Activated B cell treated with CpG ODN at 0.5 μM for 24 hours (primary cell): ENCODE measurements at regions of chr2 and their contacts with region 1.

Region 1: DNA sequence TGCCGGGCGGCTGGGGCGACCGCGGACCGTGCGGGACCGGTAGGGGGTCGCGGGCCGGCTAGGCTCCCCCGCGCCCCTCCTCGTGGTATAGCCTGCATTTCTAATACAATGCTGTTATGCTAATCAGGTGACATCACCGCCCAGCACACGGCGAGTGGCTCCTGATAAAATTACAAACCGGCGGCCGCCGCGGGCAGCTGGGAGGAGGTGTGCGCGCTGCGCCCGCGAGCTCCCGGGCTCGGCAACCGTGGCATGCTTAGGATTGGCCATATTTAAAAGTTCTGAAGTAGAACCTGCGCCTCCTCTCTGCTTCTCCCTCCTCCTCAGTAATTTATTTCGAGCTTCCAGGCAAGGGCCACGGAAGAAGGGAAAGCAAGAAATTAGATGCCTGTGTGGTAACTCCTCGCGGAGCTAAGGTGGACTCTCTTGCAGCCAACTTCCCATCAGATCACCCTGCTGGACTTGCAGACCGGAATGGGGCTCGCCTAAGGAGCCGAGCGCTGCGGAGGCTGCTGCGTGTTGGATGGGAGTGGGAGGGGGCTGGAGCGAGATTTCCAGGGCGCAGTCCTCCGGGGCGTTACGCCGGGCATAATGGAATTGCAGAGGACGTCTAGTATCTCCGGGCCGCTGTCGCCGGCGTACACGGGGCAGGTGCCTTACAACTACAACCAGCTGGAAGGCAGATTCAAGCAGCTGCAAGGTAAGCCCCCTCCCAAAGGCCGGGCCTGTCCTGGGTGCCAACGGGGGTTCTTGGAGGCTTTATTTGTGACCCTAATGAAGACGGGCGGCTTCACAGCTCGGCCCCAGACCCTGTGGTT is 102.3 kb downstream of the SPTBN1 start:
- DNase-seq: peak; percentile 60
- ATAC-seq: peak; percentile 60
- H3K4me3 Mint-ChIP-seq: peak overlapping the region; percentile 89
- H3K27ac Mint-ChIP-seq: peak overlapping the region; percentile 94
- H3K4me1 Mint-ChIP-seq: peaks cover 50% of the 10 kb centered on the region
- H3K27me3 Mint-ChIP-seq: no peaks in the 10 kb centered on the region
- CTCF ChIP-seq: no peak

Region 2: GRCh38 chr2:54522624-54523281 is 35.6 kb before region 1 on chr2:
- CTCF ChIA-PET with region 1: interaction called, 19 read pairs
- POLR2A ChIA-PET with region 1: interaction called, 14 read pairs
- intact Hi-C with region 1: loop called (anchors 2 kb)
- DNase-seq: peak; percentile 35
- ATAC-seq: peak; percentile 94
- H3K4me3 Mint-ChIP-seq: no peak overlapping the region
- H3K27ac Mint-ChIP-seq: no peak overlapping the region
- H3K4me1 Mint-ChIP-seq: peaks cover 15% of the 10 kb centered on the region
- H3K27me3 Mint-ChIP-seq: no peaks in the 10 kb centered on the region
- CTCF ChIP-seq: peak; percentile 81

Region 3: GRCh38 chr2:54570925-54571694 is 12.7 kb after region 1 on chr2:
- CTCF ChIA-PET with region 1: interaction called, 21 read pairs
- POLR2A ChIA-PET with region 1: interaction called, 198 read pairs
- intact Hi-C with region 1: loop called (anchors 1 kb)
- DNase-seq: no peak
- ATAC-seq: peak; percentile 49
- H3K4me3 Mint-ChIP-seq: peak overlapping the region; percentile 52
- H3K27ac Mint-ChIP-seq: peak overlapping the region; percentile 94
- H3K4me1 Mint-ChIP-seq: peaks cover 96% of the 10 kb centered on the region
- H3K27me3 Mint-ChIP-seq: no peaks in the 10 kb centered on the region
- CTCF ChIP-seq: no peak

Region 4: GRCh38 chr2:54589340-54590215 is 31.2 kb after region 1 on chr2:
- CTCF ChIA-PET with region 1: interaction called, 5 read pairs
- POLR2A ChIA-PET with region 1: interaction called, 36 read pairs
- intact Hi-C with region 1: loop called (anchors 1 kb)
- DNase-seq: no peak
- ATAC-seq: peak; percentile 62
- H3K4me3 Mint-ChIP-seq: peak overlapping the region; percentile 24
- H3K27ac Mint-ChIP-seq: peak overlapping the region; percentile 88
- H3K4me1 Mint-ChIP-seq: peaks cover 95% of the 10 kb centered on the region
- H3K27me3 Mint-ChIP-seq: no peaks in the 10 kb centered on the region
- CTCF ChIP-seq: no peak

Region 5: GRCh38 chr2:54606393-54606969 is 48.1 kb after region 1 on chr2:
- CTCF ChIA-PET with region 1: interaction called, 9 read pairs
- POLR2A ChIA-PET with region 1: interaction called, 15 read pairs
- intact Hi-C with region 1: loop called (anchors 2 kb)
- DNase-seq: no peak
- ATAC-seq: no peak
- H3K4me3 Mint-ChIP-seq: no peak overlapping the region
- H3K27ac Mint-ChIP-seq: no peak overlapping the region
- H3K4me1 Mint-ChIP-seq: peaks cover 80% of the 10 kb centered on the region
- H3K27me3 Mint-ChIP-seq: no peaks in the 10 kb centered on the region
- CTCF ChIP-seq: no peak

Region 6: GRCh38 chr2:55232084-55232862 is 673.9 kb after region 1 on chr2 and contains the starts of genes CLHC1 and RPS27A:
- CTCF ChIA-PET with region 1: no interaction called
- POLR2A ChIA-PET with region 1: no interaction called
- intact Hi-C with region 1: loop called (anchors 5 kb)
- DNase-seq: peak; percentile 92
- ATAC-seq: peak; percentile 86
- H3K4me3 Mint-ChIP-seq: peak within 1 kb of the TSS; percentile 99
- H3K27ac Mint-ChIP-seq: peak within 1 kb of the TSS; percentile 98
- H3K4me1 Mint-ChIP-seq: peaks cover 58% of the 10 kb centered on the region
- H3K27me3 Mint-ChIP-seq: no peaks in the 10 kb centered on the region
- CTCF ChIP-seq: no peak
- total RNA-seq, gene CLHC1: 7.1 and 10.5 TPM in 2 replicates
- total RNA-seq, gene RPS27A: 1,833 and 2,316 TPM in 2 replicates

Region 7: DNA sequence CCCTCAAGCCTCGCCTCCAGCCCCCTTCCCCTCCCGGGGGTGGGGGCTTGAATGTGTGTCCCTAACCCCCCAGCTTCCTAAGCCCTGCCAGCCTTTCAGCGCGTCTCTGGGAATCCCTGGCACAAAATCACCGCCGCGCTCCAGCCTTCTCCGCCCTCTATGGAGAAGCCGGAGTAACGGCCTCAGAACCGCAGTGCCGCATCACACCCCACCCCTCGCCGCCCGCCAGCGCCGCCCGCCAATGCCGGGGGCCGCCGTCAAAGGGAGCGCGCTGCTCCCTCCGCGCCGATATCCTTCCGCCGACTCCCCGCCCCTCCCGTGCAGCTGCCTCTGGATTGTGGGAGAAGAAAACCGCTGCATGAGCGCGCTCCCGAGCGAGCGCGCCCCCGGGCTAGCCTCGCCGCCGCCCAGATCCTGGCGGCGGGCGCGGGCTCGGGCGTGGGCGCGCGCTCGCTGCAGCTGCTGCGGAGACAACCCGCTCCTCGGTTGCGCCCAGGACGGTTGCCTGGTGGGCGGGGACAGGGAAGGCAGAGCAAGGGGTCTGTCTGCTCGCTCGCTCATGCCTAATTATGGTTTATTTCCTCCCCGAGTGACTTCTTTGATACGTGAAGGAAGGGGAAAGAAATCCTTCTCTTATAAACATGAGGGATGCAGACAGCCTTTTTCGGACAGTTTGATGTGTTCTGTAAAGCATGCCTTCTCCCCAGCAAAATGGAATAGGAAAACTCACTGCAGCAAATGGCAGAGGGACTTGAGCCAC is 861.5 kb after region 1 on chr2 and contains the start of gene CCDC88A:
- CTCF ChIA-PET with region 1: no interaction called
- POLR2A ChIA-PET with region 1: no interaction called
- intact Hi-C with region 1: loop called (anchors 5 kb)
- DNase-seq: peak; percentile 86
- ATAC-seq: peak; percentile 87
- H3K4me3 Mint-ChIP-seq: peak within 1 kb of the TSS; percentile 95
- H3K27ac Mint-ChIP-seq: peak within 1 kb of the TSS; percentile 92
- H3K4me1 Mint-ChIP-seq: peaks cover 46% of the 10 kb centered on the region
- H3K27me3 Mint-ChIP-seq: no peaks in the 10 kb centered on the region
- CTCF ChIP-seq: no peak
- total RNA-seq, gene CCDC88A: 25.6 and 35.6 TPM in 2 replicates